ENCODE measurements at regions of chr18 and their contacts with region 1.

Region 1: GRCh38 chr18:2906704-2907549 is 60.1 kb downstream of the EMILIN2 start:
- DNase-seq: peak in 1 of 2 donors; percentile 73
- H3K4me3 ChIP-seq: peak overlapping the region; percentile 66 to 72
- H3K27ac ChIP-seq: peak overlapping the region; percentile 22 to 28
- H3K4me1 ChIP-seq: peaks cover 0 to 4% of the 10 kb centered on the region in 2 donors
- H3K27me3 ChIP-seq: no peaks in the 10 kb centered on the region
- CTCF ChIP-seq: peak in 1 of 3 experiments; percentile 18

Region 2: DNA sequence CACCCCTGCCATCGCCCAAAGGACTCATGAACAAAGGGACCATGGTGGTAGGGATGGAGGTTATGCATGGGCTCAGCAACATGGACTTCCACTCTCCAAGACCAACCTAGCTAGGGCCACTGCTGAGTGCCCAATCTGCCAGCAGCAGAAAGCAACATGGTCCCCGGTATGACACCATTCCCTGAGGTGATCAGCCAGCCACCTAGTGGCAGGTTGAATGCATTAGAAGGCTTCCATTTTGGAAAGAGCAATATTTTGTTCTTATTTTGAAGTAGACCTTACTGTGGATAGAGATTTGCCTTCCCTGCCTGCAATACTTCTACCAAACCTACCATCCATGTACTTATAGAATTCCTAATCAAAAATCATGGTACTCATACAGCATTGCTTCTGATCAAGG is 435.4 kb before region 1 on chr18:
- intact Hi-C with region 1: no loop called
- DNase-seq: no peak
- H3K4me3 ChIP-seq: no peak overlapping the region
- H3K27ac ChIP-seq: no peak overlapping the region
- H3K4me1 ChIP-seq: no peaks in the 10 kb centered on the region
- H3K27me3 ChIP-seq: no peaks in the 10 kb centered on the region
- CTCF ChIP-seq: no peak

Region 3: GRCh38 chr18:2805970-2806943 is 100.7 kb before region 1 on chr18:
- intact Hi-C with region 1: loop called (anchors 5 kb)
- DNase-seq: no peak
- H3K4me3 ChIP-seq: no peak overlapping the region
- H3K27ac ChIP-seq: no peak overlapping the region
- H3K4me1 ChIP-seq: peaks cover 3 to 11% of the 10 kb centered on the region in 2 donors
- H3K27me3 ChIP-seq: no peaks in the 10 kb centered on the region
- CTCF ChIP-seq: no peak

Region 4: DNA sequence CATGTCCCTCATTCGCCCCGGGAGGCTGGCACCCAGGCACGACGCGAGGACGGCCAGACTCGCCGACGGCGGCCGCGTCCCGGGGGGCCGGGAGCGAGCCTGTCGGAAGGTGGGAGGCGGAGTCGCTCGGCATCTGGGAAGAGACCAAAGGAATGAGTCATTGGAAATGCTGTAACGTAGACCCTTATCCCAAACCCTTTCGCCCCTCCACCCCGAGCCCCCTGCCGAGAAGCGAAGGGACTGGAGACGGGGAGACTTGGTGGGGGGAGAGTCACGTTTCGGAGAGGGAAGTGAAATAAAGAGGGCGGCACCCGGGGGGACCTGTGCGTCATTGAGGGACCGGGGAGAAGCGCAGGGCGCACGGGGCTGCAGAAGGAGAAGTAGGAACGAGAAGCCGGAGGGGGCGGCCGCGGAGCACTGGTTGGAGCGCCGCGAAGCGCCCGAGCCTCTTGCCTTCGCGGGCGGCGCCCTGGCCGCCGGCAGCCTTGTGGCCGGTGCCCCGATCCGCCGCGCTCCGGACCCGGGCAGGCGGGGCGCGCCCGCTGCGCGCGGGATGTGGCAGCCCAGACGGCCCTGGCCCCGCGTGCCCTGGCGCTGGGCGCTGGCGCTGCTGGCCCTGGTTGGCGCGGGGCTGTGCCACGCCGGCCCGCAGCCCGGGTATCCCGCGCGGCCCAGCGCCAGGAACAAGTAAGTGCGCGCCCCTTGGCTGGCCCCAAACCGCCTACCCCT is 60.1 kb before region 1 on chr18 and contains the start of gene EMILIN2:
- intact Hi-C with region 1: loop called (anchors 2 kb)
- DNase-seq: peak; percentile 52 to 93
- H3K4me3 ChIP-seq: peak within 1 kb of the TSS; percentile 72 to 77
- H3K27ac ChIP-seq: peak within 1 kb of the TSS; percentile 79 to 86
- H3K4me1 ChIP-seq: peaks cover 4 to 7% of the 10 kb centered on the region in 2 donors
- H3K27me3 ChIP-seq: no peaks in the 10 kb centered on the region
- CTCF ChIP-seq: no peak
- total RNA-seq, gene EMILIN2: 22.4 TPM

Region 5: DNA sequence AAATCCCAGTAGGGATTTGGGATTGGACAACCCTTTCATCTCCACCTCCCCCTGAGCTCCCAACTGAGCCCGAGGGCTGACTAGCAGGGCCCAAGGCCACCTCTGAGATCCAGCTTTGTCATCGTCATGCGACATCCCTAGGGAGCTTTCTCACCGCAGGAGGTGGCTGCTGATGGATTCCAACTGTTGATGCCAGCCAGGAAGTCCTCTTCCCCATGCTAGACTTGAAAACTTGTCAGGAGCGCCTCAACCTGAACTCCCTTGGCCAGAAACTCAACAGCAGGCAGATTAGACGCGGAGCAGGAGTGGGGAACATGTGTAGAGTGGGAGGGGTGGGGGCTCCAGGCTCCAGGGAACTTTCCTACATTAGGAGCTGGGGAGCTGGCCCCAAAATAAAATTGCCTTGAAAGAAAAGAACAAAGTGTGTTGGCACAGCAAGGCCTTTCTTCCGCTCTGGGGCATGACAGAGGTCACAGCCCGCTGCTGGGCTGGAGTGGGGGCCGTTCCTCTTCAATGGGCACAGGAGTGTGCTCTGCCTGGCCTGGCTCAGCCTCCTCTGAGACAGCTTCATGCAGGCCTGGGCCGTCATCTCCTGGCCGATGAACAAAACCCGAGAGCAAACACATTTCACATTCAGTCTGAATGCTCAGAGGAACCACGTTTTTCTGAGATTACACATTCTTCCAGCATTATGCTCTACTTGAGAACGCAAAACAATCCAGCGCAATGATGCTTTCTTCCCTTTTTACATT is 25.7 kb before region 1 on chr18:
- intact Hi-C with region 1: loop called (anchors 2 kb)
- DNase-seq: peak in 1 of 2 donors; percentile 92
- H3K4me3 ChIP-seq: no peak overlapping the region
- H3K27ac ChIP-seq: peak overlapping the region; percentile 82 to 93
- H3K4me1 ChIP-seq: peaks cover 0 to 27% of the 10 kb centered on the region in 2 donors
- H3K27me3 ChIP-seq: no peaks in the 10 kb centered on the region
- CTCF ChIP-seq: peak in 1 of 3 experiments; percentile 7

Region 6: DNA sequence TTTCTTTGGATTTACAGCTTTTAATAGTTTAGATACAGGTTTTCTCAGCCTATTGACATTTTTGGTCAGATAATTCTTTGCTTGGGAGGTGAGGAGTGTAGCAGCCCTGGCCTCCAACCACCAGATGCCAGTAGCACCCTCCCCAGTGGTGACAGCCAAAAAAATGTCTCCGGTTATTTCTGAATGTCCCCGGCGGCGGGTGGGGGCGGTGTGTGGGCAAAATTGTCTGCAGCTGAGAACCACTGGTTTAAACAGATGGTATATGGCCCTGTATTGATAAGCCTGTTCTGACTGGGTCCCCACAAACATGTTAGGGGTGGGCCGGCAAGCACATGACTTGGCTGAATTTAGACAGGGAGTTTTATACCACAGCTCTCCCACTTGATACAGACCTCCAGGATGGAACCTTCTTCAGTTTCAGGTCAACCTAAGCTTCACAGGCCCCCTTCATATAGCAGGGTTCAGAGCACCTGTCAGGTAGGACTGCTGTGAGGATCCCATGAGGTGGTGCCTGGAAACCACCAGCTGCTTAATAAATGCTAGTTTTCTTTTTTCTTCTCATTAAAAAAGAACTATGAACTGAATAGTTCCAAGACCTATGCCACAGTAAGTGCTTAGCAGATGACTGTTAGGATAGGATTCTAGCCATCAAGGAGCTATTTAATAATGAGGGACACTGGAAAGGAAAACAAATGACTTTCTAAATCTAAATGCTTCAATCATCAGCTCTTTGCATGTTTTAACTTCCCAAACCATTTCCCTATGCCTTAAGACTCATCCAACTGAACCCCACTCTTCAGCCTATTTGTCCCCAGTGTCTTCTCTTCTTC is 87.9 kb after region 1 on chr18:
- intact Hi-C with region 1: no loop called
- DNase-seq: peak in 1 of 2 donors; percentile 75
- H3K4me3 ChIP-seq: no peak overlapping the region
- H3K27ac ChIP-seq: peak overlapping the region; percentile 60 to 71
- H3K4me1 ChIP-seq: peaks cover 7 to 32% of the 10 kb centered on the region in 2 donors
- H3K27me3 ChIP-seq: no peaks in the 10 kb centered on the region
- CTCF ChIP-seq: peak; percentile 47 to 60 (median 50)

Measured in ascending aorta (tissue), 2 donors.